K562 (cell line): ENCODE measurements at regions of chr2 and their contacts with region 1.

Region 1: DNA sequence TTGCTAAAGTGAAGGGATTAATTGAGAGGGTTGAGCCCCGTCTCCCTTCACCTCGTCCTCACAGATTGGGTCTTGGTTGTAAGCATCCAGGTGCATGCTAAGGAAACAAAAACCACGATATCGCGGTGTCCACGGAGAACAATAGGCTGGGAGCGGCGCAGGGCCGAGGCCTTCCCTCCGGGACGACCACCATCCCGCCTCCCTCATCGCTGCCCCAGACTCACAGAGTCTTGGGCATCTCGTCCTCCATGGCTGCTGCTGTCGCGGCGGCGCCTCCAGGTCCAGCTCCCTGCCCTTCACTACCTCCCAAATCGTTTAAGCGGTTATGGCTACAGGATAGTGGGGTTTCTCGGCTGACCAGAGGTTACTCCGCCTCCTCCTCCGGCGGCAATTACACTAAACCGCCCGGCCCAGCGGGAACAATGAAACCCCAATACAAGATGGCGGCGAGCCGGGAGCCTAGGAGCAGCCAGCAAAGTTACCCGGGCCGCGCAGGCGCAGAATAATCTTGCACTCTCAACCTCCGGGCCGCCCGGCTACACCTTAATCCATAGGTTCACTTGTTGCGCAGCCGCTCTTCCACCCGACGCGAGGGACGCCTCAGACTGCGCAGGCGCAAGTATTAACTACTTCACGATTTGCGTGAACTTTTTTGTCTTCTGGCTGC is at the start of gene TIA1:
- DNase-seq: peak; percentile 97 to 99 (median 98)
- ATAC-seq: peak; percentile 90
- H3K4me3 ChIP-seq: peak within 1 kb of the TSS; percentile 78
- H3K27ac ChIP-seq: peak within 1 kb of the TSS; percentile 97
- H3K4me1 ChIP-seq: peaks cover 16 to 28% of the 10 kb centered on the region in 2 experiments; a peak in 4 of 5 replicates
- H3K27me3 ChIP-seq: no peaks in the 10 kb centered on the region
- CTCF ChIP-seq: no peak
- EP300 ChIP-seq: 0 out of 2 replicates have a peak, but pooled peaks have one; percentile 20
- POLR2A ChIP-seq: peak; percentile 97
- RAD21 ChIP-seq: no peak
- polyA plus RNA-seq, gene TIA1: 25.3 to 32.3 TPM

Region 2: DNA sequence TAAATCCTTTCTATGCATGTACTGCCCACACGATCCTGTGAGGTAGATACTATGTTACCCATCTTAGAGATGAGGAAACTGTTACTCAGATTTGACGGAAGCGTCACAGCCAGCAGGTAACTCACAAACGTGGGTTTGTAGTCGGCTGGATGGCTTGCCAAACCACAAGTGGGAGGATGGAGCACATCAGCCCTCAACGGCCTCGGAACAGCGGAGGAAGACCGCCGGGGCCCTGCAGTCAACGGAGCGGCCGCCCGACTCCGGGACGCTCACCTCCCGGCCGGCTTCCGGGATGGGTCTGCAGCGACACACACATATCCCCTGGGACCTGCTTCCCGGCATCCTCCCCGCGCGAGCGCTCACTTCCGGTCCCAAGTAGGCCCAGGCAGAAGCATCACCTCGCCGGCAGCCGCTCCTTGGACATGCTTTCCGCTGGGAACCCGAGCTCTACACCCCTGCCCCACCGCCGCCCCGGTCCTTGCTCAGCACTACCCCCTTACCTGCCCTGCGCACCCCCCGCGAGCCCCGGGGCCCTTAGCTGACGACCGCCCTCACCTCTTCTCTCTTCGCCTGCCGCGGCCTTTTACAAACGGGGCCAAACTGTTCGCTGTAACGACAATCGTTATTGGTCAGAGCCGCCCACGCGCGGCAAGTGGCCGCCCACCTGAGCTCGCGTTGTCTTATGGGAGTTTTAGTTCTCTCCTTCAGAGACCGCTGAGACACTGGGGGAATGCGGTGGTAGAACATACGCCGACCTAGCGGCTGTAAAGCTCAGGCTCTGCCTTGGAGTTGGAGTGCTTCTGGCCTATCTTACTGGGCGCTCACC is 57.7 kb before region 1 on chr2 and contains the start of gene C2orf42:
- CTCF ChIA-PET with region 1: no interaction called
- POLR2A ChIA-PET with region 1: interaction called, 3 read pairs
- in situ Hi-C with region 1: no loop called
- intact Hi-C with region 1: loop called (anchors 2 kb)
- DNase-seq: peak; percentile 91 to 99 (median 96)
- ATAC-seq: peak; percentile 96
- H3K4me3 ChIP-seq: peak within 1 kb of the TSS; percentile 62
- H3K27ac ChIP-seq: peak within 1 kb of the TSS; percentile 85
- H3K4me1 ChIP-seq: peaks cover 3 to 4% of the 10 kb centered on the region in 2 experiments; a peak in 2 of 5 replicates
- H3K27me3 ChIP-seq: no peaks in the 10 kb centered on the region
- CTCF ChIP-seq: peak; percentile 19 to 44 (median 35); a peak in 5 of 6 replicates
- EP300 ChIP-seq: 0 out of 2 replicates have a peak, but pooled peaks have one; percentile 3
- POLR2A ChIP-seq: peak; percentile 96
- RAD21 ChIP-seq: peak; percentile 7 to 26; a peak in 3 of 4 replicates
- polyA plus RNA-seq, gene C2orf42: 4.6 to 4.9 TPM

Region 3: GRCh38 chr2:70214953-70215549 is 33.3 kb before region 1 on chr2:
- CTCF ChIA-PET with region 1: no interaction called
- POLR2A ChIA-PET with region 1: no interaction called
- in situ Hi-C with region 1: no loop called
- intact Hi-C with region 1: no loop called
- DNase-seq: no peak
- ATAC-seq: no peak
- H3K4me3 ChIP-seq: no peak overlapping the region
- H3K27ac ChIP-seq: no peak overlapping the region
- H3K4me1 ChIP-seq: no peaks in the 10 kb centered on the region
- H3K27me3 ChIP-seq: no peaks in the 10 kb centered on the region
- CTCF ChIP-seq: no peak
- EP300 ChIP-seq: no peak
- POLR2A ChIP-seq: no peak
- RAD21 ChIP-seq: no peak

Region 4: DNA sequence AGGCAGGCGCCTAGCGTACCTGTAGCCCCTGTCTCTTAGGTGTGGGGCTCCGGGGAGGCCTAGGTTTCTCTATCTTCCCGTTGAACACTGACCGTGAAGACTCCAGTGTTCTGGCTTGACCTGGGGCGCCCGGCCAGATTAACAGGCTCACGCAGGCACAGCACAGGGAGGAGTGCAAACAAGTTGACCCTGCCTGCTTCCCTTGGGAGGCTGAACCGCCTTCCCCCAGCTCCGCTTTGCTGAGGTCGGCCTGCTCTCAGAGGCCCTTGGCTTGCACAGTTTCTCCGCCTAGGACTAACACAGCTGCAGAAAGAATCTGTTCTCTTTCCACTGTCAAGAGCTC is 10.2 kb after region 1 on chr2:
- CTCF ChIA-PET with region 1: no interaction called
- POLR2A ChIA-PET with region 1: interaction called, 17 read pairs
- in situ Hi-C with region 1: no loop called
- intact Hi-C with region 1: no loop called
- DNase-seq: peak in 2 of 4 experiments; percentile 24 to 60
- ATAC-seq: peak; percentile 59
- H3K4me3 ChIP-seq: peak overlapping the region; percentile 68
- H3K27ac ChIP-seq: peak overlapping the region; percentile 56
- H3K4me1 ChIP-seq: peaks cover 11 to 16% of the 10 kb centered on the region in 2 experiments; a peak in 4 of 5 replicates
- H3K27me3 ChIP-seq: no peaks in the 10 kb centered on the region
- CTCF ChIP-seq: no peak
- EP300 ChIP-seq: no peak
- POLR2A ChIP-seq: no peak
- RAD21 ChIP-seq: no peak

Region 5: GRCh38 chr2:70627211-70627902 is 379.0 kb after region 1 on chr2:
- CTCF ChIA-PET with region 1: no interaction called
- POLR2A ChIA-PET with region 1: no interaction called
- in situ Hi-C with region 1: no loop called
- intact Hi-C with region 1: no loop called
- DNase-seq: peak in 3 of 4 experiments; percentile 23 to 49 (median 30)
- ATAC-seq: peak; percentile 53; the same call in 1 of the 3 replicates
- H3K4me3 ChIP-seq: no peak overlapping the region
- H3K27ac ChIP-seq: no peak overlapping the region
- H3K4me1 ChIP-seq: peaks cover 0 to 5% of the 10 kb centered on the region in 2 experiments; a peak in 3 of 5 replicates
- H3K27me3 ChIP-seq: peaks cover 0 to 6% of the 10 kb centered on the region in 2 experiments; a peak in 3 of 5 replicates
- CTCF ChIP-seq: no peak
- EP300 ChIP-seq: no peak
- POLR2A ChIP-seq: no peak
- RAD21 ChIP-seq: no peak